ENCODE measurements at regions of chr5 and their contacts with region 1.

Region 1: GRCh38 chr5:149128023-149128875 is 13.0 kb upstream of the ABLIM3 start:
- DNase-seq: no peak
- ATAC-seq: peak; percentile 88
- H3K4me3 ChIP-seq: no peak overlapping the region
- H3K27ac ChIP-seq: no peak overlapping the region
- H3K4me1 ChIP-seq: no peaks in the 10 kb centered on the region
- H3K27me3 ChIP-seq: no peaks in the 10 kb centered on the region
- CTCF ChIP-seq: peak; percentile 94

Region 2: GRCh38 chr5:148768806-148769415 is 359.3 kb before region 1 on chr5:
- CTCF ChIA-PET with region 1: no interaction called
- POLR2A ChIA-PET with region 1: no interaction called
- in situ Hi-C with region 1: no loop called
- intact Hi-C with region 1: no loop called
- DNase-seq: no peak
- ATAC-seq: no peak
- H3K4me3 ChIP-seq: no peak overlapping the region
- H3K27ac ChIP-seq: no peak overlapping the region
- H3K4me1 ChIP-seq: no peaks in the 10 kb centered on the region
- H3K27me3 ChIP-seq: no peaks in the 10 kb centered on the region; the same call in 1 of the 2 replicates
- CTCF ChIP-seq: no peak

Region 3: GRCh38 chr5:148826053-148826738 is 302.1 kb before region 1 on chr5 and contains the start of gene ADRB2:
- CTCF ChIA-PET with region 1: no interaction called
- POLR2A ChIA-PET with region 1: no interaction called
- in situ Hi-C with region 1: no loop called
- intact Hi-C with region 1: no loop called
- DNase-seq: peak; percentile 71
- ATAC-seq: peak; percentile 98
- H3K4me3 ChIP-seq: peak within 1 kb of the TSS; percentile 56 to 86
- H3K27ac ChIP-seq: no peak within 1 kb of the TSS; the same call in 1 of the 2 replicates
- H3K4me1 ChIP-seq: peaks cover 10% of the 10 kb centered on the region; the same call in 1 of the 2 replicates
- H3K27me3 ChIP-seq: no peaks in the 10 kb centered on the region; the same call in 1 of the 2 replicates
- CTCF ChIP-seq: no peak
- total RNA-seq, gene ADRB2: 1.0 TPM

Region 4: GRCh38 chr5:149143470-149143869 is 15.2 kb after region 1 on chr5:
- CTCF ChIA-PET with region 1: no interaction called
- POLR2A ChIA-PET with region 1: no interaction called
- in situ Hi-C with region 1: no loop called
- intact Hi-C with region 1: no loop called
- DNase-seq: no peak
- ATAC-seq: no peak
- H3K4me3 ChIP-seq: peak overlapping the region in 1 of 2 experiments; percentile 74; a peak in 2 of 4 replicates
- H3K27ac ChIP-seq: no peak overlapping the region
- H3K4me1 ChIP-seq: 0 out of 2 replicates have a peak, but pooled peaks cover 4% of the 10 kb centered on the region
- H3K27me3 ChIP-seq: no peaks in the 10 kb centered on the region
- CTCF ChIP-seq: no peak

Region 5: DNA sequence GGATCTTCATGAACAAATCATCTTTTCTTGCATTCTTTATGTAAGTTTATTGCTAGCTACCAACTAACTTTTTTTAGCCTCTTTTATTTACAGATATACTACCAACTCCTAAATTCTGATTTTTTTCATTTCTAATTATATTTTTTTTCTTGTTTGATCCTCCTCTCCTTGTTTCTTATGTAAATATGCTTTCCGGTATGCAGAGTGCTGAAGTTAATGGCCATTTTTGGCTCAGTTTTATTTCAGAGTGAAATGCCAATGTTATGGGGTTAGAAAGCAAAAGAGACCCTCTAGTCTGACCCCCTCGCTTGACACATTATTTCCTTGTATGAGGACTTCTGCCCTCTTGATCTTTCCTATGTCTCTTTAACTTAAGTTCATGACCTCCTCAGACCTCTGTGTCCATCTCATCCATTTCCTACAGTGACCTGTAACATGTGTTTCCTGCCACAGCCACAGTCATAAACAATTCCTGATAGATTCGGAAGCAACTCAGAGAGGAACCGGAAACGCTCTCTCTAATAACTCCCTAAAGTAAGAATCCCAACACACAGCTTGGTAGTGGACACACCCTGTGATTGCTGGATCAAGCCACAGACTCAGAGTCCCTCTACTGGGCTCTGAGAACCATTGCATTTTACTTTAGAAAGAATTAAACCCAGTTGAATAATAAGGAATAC is 100.5 kb after region 1 on chr5:
- CTCF ChIA-PET with region 1: interaction called, 5 read pairs
- POLR2A ChIA-PET with region 1: no interaction called
- in situ Hi-C with region 1: no loop called
- intact Hi-C with region 1: loop called (anchors 2 kb)
- DNase-seq: peak; percentile 38
- ATAC-seq: peak; percentile 90
- H3K4me3 ChIP-seq: no peak overlapping the region
- H3K27ac ChIP-seq: no peak overlapping the region
- H3K4me1 ChIP-seq: no peaks in the 10 kb centered on the region
- H3K27me3 ChIP-seq: no peaks in the 10 kb centered on the region
- CTCF ChIP-seq: peak; percentile 78

Region 6: GRCh38 chr5:149257965-149258705 is 129.9 kb after region 1 on chr5:
- CTCF ChIA-PET with region 1: interaction called, 5 read pairs
- POLR2A ChIA-PET with region 1: interaction called, 11 read pairs
- in situ Hi-C with region 1: loop called (anchors 25 kb)
- intact Hi-C with region 1: no loop called
- DNase-seq: no peak
- ATAC-seq: no peak
- H3K4me3 ChIP-seq: no peak overlapping the region
- H3K27ac ChIP-seq: no peak overlapping the region
- H3K4me1 ChIP-seq: no peaks in the 10 kb centered on the region
- H3K27me3 ChIP-seq: no peaks in the 10 kb centered on the region
- CTCF ChIP-seq: no peak

Measured in Panc1 (cell line).